ENCODE measurements at regions of chr16 and their contacts with region 1.

Region 1: GRCh38 chr16:71883849-71884638 is at the start of gene ZNF821:
- DNase-seq: peak; percentile 73
- H3K4me3 Mint-ChIP-seq: peak within 1 kb of the TSS; percentile 93
- H3K27ac Mint-ChIP-seq: peak within 1 kb of the TSS; percentile 80
- H3K4me1 Mint-ChIP-seq: peaks cover 46% of the 10 kb centered on the region
- H3K27me3 Mint-ChIP-seq: no peaks in the 10 kb centered on the region
- total RNA-seq, gene ZNF821: 5.9 TPM

Region 2: GRCh38 chr16:71723537-71724319 is 160.3 kb before region 1 on chr16:
- CTCF ChIA-PET with region 1: interaction called, 3 read pairs
- intact Hi-C with region 1: loop called (anchors 1 kb)
- DNase-seq: peak; percentile 74
- H3K4me3 Mint-ChIP-seq: peak overlapping the region; percentile 80
- H3K27ac Mint-ChIP-seq: no peak overlapping the region
- H3K4me1 Mint-ChIP-seq: peaks cover 18% of the 10 kb centered on the region
- H3K27me3 Mint-ChIP-seq: peaks cover 6% of the 10 kb centered on the region

Region 3: GRCh38 chr16:71808593-71809459 is 75.2 kb before region 1 on chr16 and contains the start of gene AP1G1:
- CTCF ChIA-PET with region 1: interaction called, 20 read pairs
- intact Hi-C with region 1: loop called (anchors 1 kb)
- DNase-seq: peak; percentile 97
- H3K4me3 Mint-ChIP-seq: peak within 1 kb of the TSS; percentile 90
- H3K27ac Mint-ChIP-seq: peak within 1 kb of the TSS; percentile 100
- H3K4me1 Mint-ChIP-seq: peaks cover 42% of the 10 kb centered on the region
- H3K27me3 Mint-ChIP-seq: no peaks in the 10 kb centered on the region
- total RNA-seq, gene AP1G1: 56.4 to 59.3 TPM

Region 4: GRCh38 chr16:71853413-71853812 is 30.6 kb before region 1 on chr16:
- CTCF ChIA-PET with region 1: interaction called, 17 read pairs
- intact Hi-C with region 1: no loop called
- DNase-seq: no peak
- H3K4me3 Mint-ChIP-seq: no peak overlapping the region
- H3K27ac Mint-ChIP-seq: peak overlapping the region; percentile 20
- H3K4me1 Mint-ChIP-seq: peaks cover 52% of the 10 kb centered on the region
- H3K27me3 Mint-ChIP-seq: no peaks in the 10 kb centered on the region

Region 5: DNA sequence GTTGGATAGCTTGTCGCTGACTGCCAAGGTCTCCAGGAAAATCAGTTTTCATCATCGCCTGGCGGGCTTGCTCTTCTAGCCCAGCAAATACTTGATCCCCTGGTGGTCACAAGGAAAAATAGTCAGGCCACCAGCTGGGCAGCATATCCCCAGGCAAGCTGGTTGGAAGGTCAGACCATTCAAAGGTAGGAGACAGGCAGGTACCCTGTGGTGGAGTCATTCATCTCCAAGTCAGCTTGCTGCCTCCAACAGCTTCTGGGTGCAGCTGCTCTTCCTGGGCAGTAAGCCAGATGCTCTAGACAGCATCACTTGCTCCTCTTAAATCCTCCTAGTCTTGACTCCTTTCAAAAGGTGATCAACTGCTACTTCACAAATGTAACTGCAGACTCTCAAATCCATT is 16.1 kb before region 1 on chr16:
- CTCF ChIA-PET with region 1: interaction called, 52 read pairs
- intact Hi-C with region 1: loop called (anchors 1 kb)
- DNase-seq: no peak
- H3K4me3 Mint-ChIP-seq: no peak overlapping the region
- H3K27ac Mint-ChIP-seq: no peak overlapping the region
- H3K4me1 Mint-ChIP-seq: peaks cover 32% of the 10 kb centered on the region
- H3K27me3 Mint-ChIP-seq: no peaks in the 10 kb centered on the region

Region 6: GRCh38 chr16:71961066-71962039 is 77.3 kb after region 1 on chr16:
- CTCF ChIA-PET with region 1: interaction called, 13 read pairs
- intact Hi-C with region 1: loop called (anchors 1 kb)
- DNase-seq: peak; percentile 94
- H3K4me3 Mint-ChIP-seq: no peak overlapping the region
- H3K27ac Mint-ChIP-seq: no peak overlapping the region
- H3K4me1 Mint-ChIP-seq: peaks cover 2% of the 10 kb centered on the region
- H3K27me3 Mint-ChIP-seq: no peaks in the 10 kb centered on the region

Region 7: DNA sequence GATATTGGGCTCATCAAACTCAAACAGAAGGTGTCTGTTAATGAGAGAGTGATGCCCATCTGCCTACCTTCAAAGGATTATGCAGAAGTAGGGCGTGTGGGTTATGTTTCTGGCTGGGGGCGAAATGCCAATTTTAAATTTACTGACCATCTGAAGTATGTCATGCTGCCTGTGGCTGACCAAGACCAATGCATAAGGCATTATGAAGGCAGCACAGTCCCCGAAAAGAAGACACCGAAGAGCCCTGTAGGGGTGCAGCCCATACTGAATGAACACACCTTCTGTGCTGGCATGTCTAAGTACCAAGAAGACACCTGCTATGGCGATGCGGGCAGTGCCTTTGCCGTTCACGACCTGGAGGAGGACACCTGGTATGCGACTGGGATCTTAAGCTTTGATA is 176.4 kb after region 1 on chr16:
- CTCF ChIA-PET with region 1: no interaction called
- intact Hi-C with region 1: no loop called
- DNase-seq: no peak
- H3K4me3 Mint-ChIP-seq: no peak overlapping the region
- H3K27ac Mint-ChIP-seq: no peak overlapping the region
- H3K4me1 Mint-ChIP-seq: no peaks in the 10 kb centered on the region
- H3K27me3 Mint-ChIP-seq: no peaks in the 10 kb centered on the region

Measured in activated naive CD4-positive, alpha-beta T cell treated with anti-CD3 and anti-CD28 coated beads for 36 hours (primary cell).